ENCODE measurements at regions of chr1 and their contacts with region 1.

Region 1: GRCh38 chr1:176880954-176881595 is 283.4 kb downstream of the ASTN1 start:
- DNase-seq: peak; percentile 81
- H3K4me3 ChIP-seq: no peak overlapping the region
- H3K27ac ChIP-seq: no peak overlapping the region
- H3K4me1 ChIP-seq: peaks cover 0 to 6% (median 6%) of the 10 kb centered on the region in 4 donors
- H3K27me3 ChIP-seq: no peaks in the 10 kb centered on the region
- CTCF ChIP-seq: peak; percentile 57 to 90 (median 82)
- EP300 ChIP-seq: no peak
- POLR2A ChIP-seq: no peak

Region 2: DNA sequence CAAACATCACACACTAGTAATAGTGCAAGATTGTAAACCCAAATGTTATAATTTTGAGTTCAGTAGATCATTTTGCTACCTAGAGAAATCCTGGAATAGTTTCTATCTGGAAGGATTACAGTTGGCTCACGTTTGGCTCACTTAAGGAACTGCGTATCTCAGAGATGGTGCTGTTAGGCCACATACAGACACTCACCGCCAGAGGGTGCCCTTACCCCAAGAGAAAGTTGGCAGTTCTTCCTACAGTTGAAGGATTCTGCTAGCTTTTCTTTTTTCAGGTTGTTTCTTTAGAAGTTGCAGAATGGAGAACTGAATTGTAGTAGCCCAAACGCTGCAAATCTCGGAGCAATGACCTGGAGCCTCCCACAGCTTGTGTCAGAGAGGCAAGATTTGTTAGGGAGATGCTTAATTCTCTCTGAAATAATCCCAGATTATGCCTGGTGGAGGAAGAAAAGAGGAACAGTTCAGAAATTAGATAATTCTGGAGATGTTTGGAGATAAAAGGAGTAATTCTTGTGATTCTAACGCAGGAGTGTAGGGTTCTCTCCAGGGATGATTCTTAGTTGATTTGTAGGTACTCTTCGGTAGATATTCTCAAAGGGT is 506.0 kb before region 1 on chr1:
- intact Hi-C with region 1: loop called (anchors 1 kb)
- DNase-seq: peak; percentile 80
- H3K4me3 ChIP-seq: no peak overlapping the region
- H3K27ac ChIP-seq: no peak overlapping the region
- H3K4me1 ChIP-seq: no peaks in the 10 kb centered on the region
- H3K27me3 ChIP-seq: no peaks in the 10 kb centered on the region
- CTCF ChIP-seq: peak; percentile 34 to 83 (median 73)
- EP300 ChIP-seq: no peak
- POLR2A ChIP-seq: no peak

Region 3: DNA sequence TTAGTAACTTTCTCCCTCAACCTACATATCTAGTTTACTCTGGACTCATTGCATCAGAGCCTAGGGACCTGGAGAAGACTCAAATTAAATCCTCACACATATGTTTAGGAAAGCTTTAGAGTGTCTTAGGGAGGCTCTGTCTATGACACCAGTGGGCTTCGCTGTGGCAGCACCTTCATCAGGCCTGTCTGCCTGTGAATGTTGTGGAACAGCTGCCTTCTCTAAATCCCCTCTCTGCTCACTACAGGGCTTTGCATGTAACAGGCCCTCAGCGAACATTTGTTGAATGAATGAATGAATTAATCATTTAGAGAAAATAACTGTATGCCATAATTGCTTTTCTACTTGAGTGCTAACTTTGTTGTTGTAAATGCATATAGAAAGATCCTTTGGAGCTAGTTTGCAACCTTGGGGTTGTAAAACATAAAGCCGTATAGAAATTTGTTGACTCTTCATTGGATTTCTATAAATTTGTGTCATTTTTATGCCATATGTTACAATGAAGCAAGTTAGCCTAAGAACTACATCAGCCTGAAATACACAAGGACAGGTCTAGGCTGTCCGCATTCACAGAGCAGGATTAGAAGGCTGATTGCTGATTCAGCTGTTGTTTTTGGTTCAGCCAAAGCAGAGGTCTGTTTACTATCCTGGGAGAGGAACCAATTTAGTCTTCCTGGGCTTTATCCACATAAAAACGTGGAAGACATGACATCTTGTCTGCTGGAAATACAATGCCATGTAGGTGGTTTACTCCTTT is 45.4 kb after region 1 on chr1:
- intact Hi-C with region 1: no loop called
- DNase-seq: no peak
- H3K4me3 ChIP-seq: no peak overlapping the region
- H3K27ac ChIP-seq: no peak overlapping the region
- H3K4me1 ChIP-seq: no peaks in the 10 kb centered on the region
- H3K27me3 ChIP-seq: no peaks in the 10 kb centered on the region
- CTCF ChIP-seq: no peak
- EP300 ChIP-seq: no peak
- POLR2A ChIP-seq: no peak